Calu3 (cell line): ENCODE measurements at regions of chr5 and their contacts with region 1.

Region 1: DNA sequence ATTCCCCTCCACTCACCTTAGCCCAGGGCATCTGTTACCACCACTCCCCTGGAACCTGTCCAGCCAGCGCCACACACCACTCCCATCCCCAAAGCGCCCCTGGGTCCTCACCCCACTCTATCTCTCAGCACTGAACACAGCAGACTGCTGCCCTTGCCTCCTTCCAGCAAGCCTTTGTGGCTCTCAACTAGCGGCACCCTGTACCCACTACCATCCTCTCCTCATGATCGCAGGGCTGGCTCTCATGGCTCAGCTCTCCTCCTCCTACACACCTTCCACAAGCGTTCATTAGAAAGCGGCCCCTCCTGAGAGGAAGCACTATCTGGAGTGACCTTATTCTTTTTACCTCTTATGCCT is 13.3 kb upstream of the BASP1 start:
- DNase-seq: no peak
- H3K4me3 Mint-ChIP-seq: no peak overlapping the region
- H3K27ac Mint-ChIP-seq: no peak overlapping the region
- H3K4me1 Mint-ChIP-seq: peaks cover 14% of the 10 kb centered on the region
- H3K27me3 Mint-ChIP-seq: peaks cover 19% of the 10 kb centered on the region
- CTCF ChIP-seq: no peak

Region 2: GRCh38 chr5:16791036-16791705 is 412.9 kb before region 1 on chr5:
- CTCF ChIA-PET with region 1: no interaction called
- intact Hi-C with region 1: loop called (anchors 1 kb)
- DNase-seq: peak; percentile 50
- H3K4me3 Mint-ChIP-seq: no peak overlapping the region
- H3K27ac Mint-ChIP-seq: no peak overlapping the region
- H3K4me1 Mint-ChIP-seq: peaks cover 31% of the 10 kb centered on the region
- H3K27me3 Mint-ChIP-seq: no peaks in the 10 kb centered on the region
- CTCF ChIP-seq: peak; percentile 64

Region 3: GRCh38 chr5:17228821-17229291 is 24.7 kb after region 1 on chr5:
- CTCF ChIA-PET with region 1: no interaction called
- intact Hi-C with region 1: no loop called
- DNase-seq: no peak
- H3K4me3 Mint-ChIP-seq: no peak overlapping the region
- H3K27ac Mint-ChIP-seq: no peak overlapping the region
- H3K4me1 Mint-ChIP-seq: no peaks in the 10 kb centered on the region
- H3K27me3 Mint-ChIP-seq: peaks cover 81% of the 10 kb centered on the region
- CTCF ChIP-seq: no peak